Activated T-helper 1 cell treated with anti-CD3 and anti-CD28 coated beads, Interleukin-12 subunit alpha, Interleukin-12 subunit beta, Interleukin-2, Interleukin-4 antibody, amounts not matched to agents 30 ng/mL and 10 ng/mL and 1 ng/mL, durations not matched to agents 14 hours and 24 hours and 36 hours (primary cell): ENCODE measurements at regions of chr4 and their contacts with region 1.

Region 1: DNA sequence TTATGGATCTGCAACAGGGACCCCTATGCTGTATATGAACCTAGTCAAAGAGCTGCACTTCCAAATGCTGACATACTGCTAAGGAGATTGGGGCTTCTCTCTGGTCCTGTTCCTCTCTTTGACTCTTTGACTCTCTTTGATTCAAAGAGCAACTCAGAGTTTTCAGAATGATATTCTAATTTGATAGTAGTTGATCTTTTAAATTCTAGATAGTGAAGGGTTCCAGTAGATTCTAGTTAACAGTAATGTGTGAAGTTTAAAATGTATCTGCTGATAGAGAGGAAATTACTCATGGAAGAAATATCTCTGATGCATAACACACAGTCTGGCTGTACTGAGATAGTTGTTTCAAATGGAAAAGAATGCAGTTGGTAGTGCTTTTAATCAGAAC is 239.1 kb downstream of the RASL11B start:
- DNase-seq: no peak
- H3K4me3 Mint-ChIP-seq: no peak overlapping the region
- H3K27ac Mint-ChIP-seq: peak overlapping the region; percentile 83
- H3K4me1 Mint-ChIP-seq: peaks cover 14% of the 10 kb centered on the region
- H3K27me3 Mint-ChIP-seq: no peaks in the 10 kb centered on the region

Region 2: DNA sequence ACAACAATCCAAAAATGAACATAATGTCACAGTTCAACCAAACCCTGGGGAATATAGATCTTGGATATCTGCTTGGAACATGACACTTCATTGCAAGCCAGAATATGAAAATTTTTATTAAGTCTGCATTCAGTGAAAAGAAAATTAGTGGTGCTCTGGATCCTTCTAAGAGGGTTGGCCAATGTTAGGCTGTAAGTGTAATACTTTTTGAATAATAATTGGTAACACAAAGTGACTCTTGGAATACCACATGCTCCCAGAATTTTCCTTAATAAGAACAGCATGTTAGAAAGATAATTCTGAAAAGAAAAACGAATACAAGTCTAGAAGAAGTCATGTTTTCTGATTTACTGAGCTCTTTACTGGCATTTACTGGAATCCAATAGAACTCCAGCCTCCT is 63.3 kb before region 1 on chr4:
- intact Hi-C with region 1: loop called (anchors 1 kb)
- DNase-seq: no peak
- H3K4me3 Mint-ChIP-seq: no peak overlapping the region
- H3K27ac Mint-ChIP-seq: no peak overlapping the region
- H3K4me1 Mint-ChIP-seq: peaks cover 6% of the 10 kb centered on the region
- H3K27me3 Mint-ChIP-seq: no peaks in the 10 kb centered on the region

Region 3: DNA sequence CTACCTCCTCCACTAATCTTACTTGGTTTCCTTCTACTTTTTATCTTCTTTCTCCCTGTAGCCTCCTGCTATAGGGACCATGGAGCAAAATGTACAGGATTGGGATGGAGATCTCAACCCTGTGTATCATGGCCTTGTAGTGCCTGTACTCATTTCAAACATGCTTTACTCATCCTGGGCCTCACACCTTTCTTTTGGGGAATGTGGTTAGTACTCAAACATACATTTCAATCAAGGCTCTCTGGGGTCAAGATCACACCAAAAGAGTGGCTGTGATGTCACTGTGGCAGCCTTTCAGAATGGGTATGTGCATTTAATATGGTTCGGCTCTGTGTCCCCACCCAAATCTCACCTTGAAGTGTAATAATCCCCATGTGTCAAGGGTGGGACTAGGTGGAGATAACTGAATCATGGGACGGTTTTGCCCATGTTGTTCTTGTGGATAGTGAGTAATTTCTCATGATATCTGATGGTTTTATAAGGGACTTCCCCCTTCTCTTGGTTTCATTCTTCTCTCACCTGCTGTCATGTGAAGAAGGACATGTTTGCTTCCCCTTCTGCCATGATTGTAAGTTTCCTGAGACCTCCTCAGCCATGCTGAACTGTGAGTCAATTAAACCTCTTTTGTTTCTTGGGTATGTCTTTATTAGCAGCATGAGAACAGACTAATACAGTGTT is 33.9 kb before region 1 on chr4:
- intact Hi-C with region 1: loop called (anchors 1 kb)
- DNase-seq: no peak
- H3K4me3 Mint-ChIP-seq: no peak overlapping the region
- H3K27ac Mint-ChIP-seq: no peak overlapping the region
- H3K4me1 Mint-ChIP-seq: no peaks in the 10 kb centered on the region
- H3K27me3 Mint-ChIP-seq: no peaks in the 10 kb centered on the region

Region 4: GRCh38 chr4:53113431-53114225 is 12.4 kb after region 1 on chr4:
- intact Hi-C with region 1: loop called (anchors 1 kb)
- DNase-seq: no peak
- H3K4me3 Mint-ChIP-seq: no peak overlapping the region
- H3K27ac Mint-ChIP-seq: peak overlapping the region; percentile 86
- H3K4me1 Mint-ChIP-seq: peaks cover 27% of the 10 kb centered on the region
- H3K27me3 Mint-ChIP-seq: no peaks in the 10 kb centered on the region

Region 5: GRCh38 chr4:53132132-53132896 is 31.1 kb after region 1 on chr4:
- intact Hi-C with region 1: loop called (anchors 1 kb)
- DNase-seq: no peak
- H3K4me3 Mint-ChIP-seq: no peak overlapping the region
- H3K27ac Mint-ChIP-seq: peak overlapping the region; percentile 79
- H3K4me1 Mint-ChIP-seq: peaks cover 31% of the 10 kb centered on the region
- H3K27me3 Mint-ChIP-seq: no peaks in the 10 kb centered on the region

Region 6: DNA sequence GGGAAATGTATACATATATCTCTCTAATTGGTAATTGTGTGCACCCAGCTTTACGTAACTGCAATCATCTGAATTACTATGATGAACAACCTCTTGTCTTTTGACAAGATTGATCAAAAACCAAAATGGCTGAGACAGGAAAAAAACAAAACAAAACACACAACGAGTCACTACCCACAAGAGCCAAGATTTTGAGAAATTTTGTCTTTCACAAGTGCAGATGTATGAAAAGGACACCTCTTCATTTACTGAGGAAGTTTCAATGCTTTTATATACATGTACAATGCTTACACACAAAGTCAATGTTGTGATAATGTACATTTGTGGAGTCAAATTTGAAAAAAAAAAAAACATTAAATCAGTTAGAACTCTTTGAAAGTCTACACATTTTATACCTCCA is 40.1 kb after region 1 on chr4:
- intact Hi-C with region 1: loop called (anchors 1 kb)
- DNase-seq: no peak
- H3K4me3 Mint-ChIP-seq: no peak overlapping the region
- H3K27ac Mint-ChIP-seq: peak overlapping the region; percentile 28
- H3K4me1 Mint-ChIP-seq: peaks cover 35% of the 10 kb centered on the region
- H3K27me3 Mint-ChIP-seq: no peaks in the 10 kb centered on the region